PC-9 (cell line): ENCODE measurements at regions of chr1 and their contacts with region 1.

Region 1: DNA sequence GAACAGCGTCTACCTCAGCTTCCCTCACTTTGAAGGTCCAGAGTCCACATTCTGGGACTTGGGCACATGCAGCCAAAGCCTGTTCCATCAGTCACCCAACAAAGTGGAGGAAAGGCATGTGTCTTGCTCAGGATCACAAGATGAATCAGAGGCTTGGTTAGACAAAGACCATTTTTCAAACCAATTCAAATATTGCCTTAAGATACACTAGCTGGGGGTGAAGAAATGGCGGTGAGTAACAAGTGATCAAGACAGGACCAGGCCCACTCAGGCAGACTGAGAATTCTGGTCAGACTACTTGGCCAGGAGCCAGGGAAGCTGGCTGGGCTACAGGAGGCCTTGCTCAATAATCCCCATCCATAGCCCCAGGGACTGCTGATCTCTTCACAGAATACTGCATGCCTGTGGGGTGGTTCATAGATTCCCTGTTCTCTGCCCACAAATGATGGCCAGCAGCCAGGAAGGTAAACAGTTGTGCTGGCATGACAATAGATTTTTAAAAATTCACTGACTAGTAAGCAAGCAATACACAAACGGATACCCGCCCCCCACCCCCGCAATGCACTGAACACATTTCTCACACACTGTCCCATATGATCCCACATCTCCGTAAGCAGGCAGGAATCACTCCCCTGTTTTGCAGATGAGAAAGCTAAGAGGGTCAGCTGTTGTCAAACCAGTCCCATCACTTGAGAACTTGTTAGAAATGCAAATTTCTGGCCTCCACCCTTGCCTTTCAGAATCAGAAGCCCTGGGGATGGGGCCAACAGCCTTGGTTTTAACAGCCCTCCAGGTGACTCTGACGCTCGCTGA is 27.2 kb downstream of the ERI3 start:
- DNase-seq: peak; percentile 99
- H3K4me3 ChIP-seq: no peak overlapping the region
- H3K27ac ChIP-seq: peak overlapping the region; percentile 72
- H3K4me1 ChIP-seq: peaks cover 45% of the 10 kb centered on the region
- H3K27me3 ChIP-seq: no peaks in the 10 kb centered on the region
- CTCF ChIP-seq: no peak

Region 2: GRCh38 chr1:44084998-44085675 is 242.7 kb before region 1 on chr1:
- CTCF ChIA-PET with region 1: no interaction called
- POLR2A ChIA-PET with region 1: no interaction called
- intact Hi-C with region 1: loop called (anchors 5 kb)
- DNase-seq: peak; percentile 26 to 79
- H3K4me3 ChIP-seq: no peak overlapping the region
- H3K27ac ChIP-seq: no peak overlapping the region
- H3K4me1 ChIP-seq: peaks cover 7% of the 10 kb centered on the region; the same call in 1 of the 2 replicates
- H3K27me3 ChIP-seq: no peaks in the 10 kb centered on the region
- CTCF ChIP-seq: no peak

Region 3: DNA sequence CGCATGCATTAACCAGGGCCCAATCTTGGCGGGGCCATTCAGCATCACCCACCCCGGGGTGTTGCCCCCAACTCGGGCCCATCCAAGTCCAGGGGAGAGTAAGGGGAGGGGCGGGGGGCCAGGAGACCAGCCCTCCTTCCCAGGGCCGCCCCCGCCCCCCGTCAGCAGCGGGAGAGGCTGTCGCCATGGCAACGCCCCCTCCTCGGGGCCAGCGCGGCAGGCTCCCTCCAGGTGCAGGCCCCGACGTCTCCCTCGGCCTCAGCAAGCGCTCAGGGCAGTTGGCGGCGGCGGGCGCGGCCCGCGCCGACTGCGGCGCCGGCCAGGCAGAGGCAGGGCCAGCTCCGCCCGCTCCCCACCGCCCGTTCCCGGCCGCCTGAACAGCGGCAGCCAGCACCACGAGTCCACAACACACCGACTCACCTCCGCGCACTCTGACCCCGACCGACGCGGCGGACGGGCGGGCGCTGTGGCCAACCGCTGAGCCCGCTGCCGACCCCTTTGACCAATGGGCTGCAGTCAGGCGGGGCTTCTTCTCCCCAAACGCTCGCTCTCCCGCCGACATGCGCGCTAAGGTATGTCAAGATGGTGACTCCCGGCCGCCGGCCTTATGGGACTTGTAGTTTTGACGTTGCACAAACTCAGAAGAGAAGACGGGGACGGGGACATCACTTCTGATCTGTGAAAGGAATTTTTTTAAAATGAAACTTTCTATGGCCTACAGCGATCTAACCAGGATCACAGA is 27.1 kb after region 1 on chr1 and contains the start of gene ERI3:
- CTCF ChIA-PET with region 1: interaction called, 3 read pairs
- POLR2A ChIA-PET with region 1: interaction called, 6 read pairs
- intact Hi-C with region 1: loop called (anchors 1 kb)
- DNase-seq: peak; percentile 92 to 98
- H3K4me3 ChIP-seq: peak within 1 kb of the TSS; percentile 99
- H3K27ac ChIP-seq: 0 out of 2 replicates have a peak within 1 kb of the TSS, but pooled peaks have one; percentile 40
- H3K4me1 ChIP-seq: peaks cover 26% of the 10 kb centered on the region; the same call in 1 of the 2 replicates
- H3K27me3 ChIP-seq: no peaks in the 10 kb centered on the region
- CTCF ChIP-seq: no peak
- total RNA-seq, gene ERI3: 120 and 133 TPM in 2 replicates